Caco-2 (cell line): ENCODE measurements at regions of chr5 and their contacts with region 1.

Region 1: DNA sequence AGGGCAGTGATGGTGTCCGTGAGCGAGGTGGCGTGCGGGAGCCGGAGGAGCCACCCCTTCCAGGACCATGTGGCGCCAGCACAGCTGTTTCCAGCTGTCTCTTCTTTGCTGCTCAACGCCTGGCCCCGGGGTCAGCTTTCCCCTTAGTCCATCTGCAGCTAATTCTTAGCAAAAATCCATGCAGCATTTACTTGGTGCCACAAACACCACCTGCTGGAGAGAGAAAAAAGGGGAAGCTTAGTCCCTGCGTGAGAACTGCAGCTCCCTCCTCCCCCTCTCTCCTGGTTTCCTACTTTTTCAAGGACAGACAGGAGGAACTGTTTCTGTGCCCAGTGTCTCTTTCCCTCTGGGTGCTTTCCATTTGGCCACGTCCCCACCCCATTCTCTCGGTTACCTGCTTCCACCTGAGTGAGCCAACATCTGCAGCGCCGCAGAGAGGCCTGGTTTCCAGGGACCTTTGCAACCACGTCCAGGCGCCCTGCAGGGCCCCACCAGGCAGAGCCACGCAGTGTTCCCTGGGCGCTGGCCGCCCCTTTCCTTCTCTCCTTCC is 3.4 kb downstream of the SLC6A19 start:
- DNase-seq: peak; percentile 68 to 72
- H3K4me3 ChIP-seq: no peak overlapping the region
- H3K4me3 Mint-ChIP-seq: no peak overlapping the region
- H3K27ac Mint-ChIP-seq: no peak overlapping the region
- H3K4me1 ChIP-seq: peaks cover 44% of the 10 kb centered on the region
- H3K4me1 Mint-ChIP-seq: no peaks in the 10 kb centered on the region
- H3K27me3 ChIP-seq: no peaks in the 10 kb centered on the region
- H3K27me3 Mint-ChIP-seq: no peaks in the 10 kb centered on the region
- CTCF ChIP-seq: peak; percentile 55 to 84

Region 2: DNA sequence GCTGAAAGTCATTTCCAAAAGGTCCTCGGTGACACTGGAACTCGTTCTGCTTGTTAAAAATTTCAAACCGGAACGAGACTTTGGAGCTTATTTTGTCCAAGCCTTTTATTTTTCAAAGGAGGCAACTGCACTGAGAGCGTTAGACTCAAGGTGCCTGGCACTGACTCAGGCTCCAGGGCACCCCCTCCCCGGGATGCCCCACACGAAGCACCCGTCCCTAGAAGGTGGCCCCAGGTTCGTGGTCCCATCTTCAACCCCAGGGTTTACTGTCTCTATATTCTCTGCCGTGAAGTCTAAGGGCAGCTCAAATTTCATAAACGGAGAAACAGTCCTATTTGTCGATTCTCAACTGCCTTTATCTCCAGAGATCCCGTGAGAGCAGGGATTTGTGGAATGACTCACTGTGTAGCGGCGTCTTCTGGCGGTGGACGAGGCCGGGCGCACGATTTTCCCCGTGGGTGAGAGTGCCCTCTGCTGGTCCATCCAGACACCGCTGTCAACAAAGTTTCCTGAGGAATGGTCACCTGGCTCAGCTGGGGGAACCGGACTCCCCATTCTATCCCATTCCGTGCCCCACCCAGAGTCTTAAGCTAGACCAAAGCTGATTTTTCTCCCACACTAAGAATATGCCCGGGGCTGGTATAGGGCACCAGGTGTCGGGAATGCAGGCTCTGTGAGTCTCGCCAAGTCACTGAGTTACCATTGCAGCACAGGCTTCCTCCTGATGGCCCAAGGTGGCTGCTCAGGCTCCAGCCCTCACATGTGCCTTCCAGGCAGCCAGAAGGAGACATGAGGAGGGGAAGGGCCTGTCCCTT is 30.4 kb before region 1 on chr5:
- CTCF ChIA-PET with region 1: interaction called, 36 read pairs
- POLR2A ChIA-PET with region 1: interaction called, 6 read pairs
- intact Hi-C with region 1: no loop called
- DNase-seq: peak; percentile 64 to 73
- H3K4me3 ChIP-seq: no peak overlapping the region
- H3K4me3 Mint-ChIP-seq: no peak overlapping the region
- H3K27ac Mint-ChIP-seq: no peak overlapping the region
- H3K4me1 ChIP-seq: peaks cover 12% of the 10 kb centered on the region
- H3K4me1 Mint-ChIP-seq: peaks cover 8% of the 10 kb centered on the region
- H3K27me3 ChIP-seq: no peaks in the 10 kb centered on the region
- H3K27me3 Mint-ChIP-seq: no peaks in the 10 kb centered on the region
- CTCF ChIP-seq: peak; percentile 46 to 64

Region 3: DNA sequence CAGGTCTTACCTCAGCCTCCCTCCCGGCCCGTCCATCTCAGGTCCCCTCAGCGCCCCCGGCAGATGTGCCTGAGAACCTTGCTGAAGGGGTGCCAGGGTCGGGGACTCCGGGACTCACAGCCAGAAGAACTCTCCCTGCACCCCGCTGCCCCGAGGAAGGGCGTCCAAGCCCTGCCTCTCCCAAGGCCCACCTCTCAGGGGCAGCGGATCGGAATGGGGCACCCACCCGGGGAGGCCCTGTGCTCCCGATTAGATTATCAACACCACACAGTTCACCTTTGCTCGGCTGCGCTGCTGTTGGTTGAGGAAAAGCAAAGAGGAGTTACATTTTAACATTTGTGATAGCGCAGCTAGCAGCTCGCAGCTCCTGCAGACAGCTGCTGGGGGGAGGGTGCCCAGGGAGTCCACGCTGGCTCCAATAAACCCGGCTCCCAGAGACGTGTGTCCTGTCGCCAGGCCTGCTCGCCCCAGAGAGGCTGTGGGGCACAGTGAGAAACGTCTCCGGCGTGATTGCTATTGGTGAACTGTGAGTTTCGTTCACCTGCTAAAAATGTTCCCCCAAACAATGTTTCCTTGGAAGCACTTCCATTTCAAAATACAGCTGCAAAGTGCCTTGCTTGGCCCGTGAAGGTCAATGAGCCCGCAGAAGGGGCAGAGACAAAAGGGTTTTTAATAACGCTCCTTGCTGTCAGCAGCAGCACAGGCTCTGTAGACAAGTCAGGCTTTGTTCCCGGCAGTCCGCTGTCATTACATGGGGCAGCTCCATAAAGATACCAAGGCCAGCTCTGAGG is 21.9 kb before region 1 on chr5:
- CTCF ChIA-PET with region 1: interaction called, 21 read pairs
- POLR2A ChIA-PET with region 1: interaction called, 6 read pairs
- intact Hi-C with region 1: loop called (anchors 1 kb)
- DNase-seq: peak; percentile 75 to 89
- H3K4me3 ChIP-seq: peak overlapping the region; percentile 23
- H3K4me3 Mint-ChIP-seq: peak overlapping the region; percentile 61
- H3K27ac Mint-ChIP-seq: peak overlapping the region; percentile 75
- H3K4me1 ChIP-seq: peaks cover 74% of the 10 kb centered on the region
- H3K4me1 Mint-ChIP-seq: peaks cover 16% of the 10 kb centered on the region
- H3K27me3 ChIP-seq: no peaks in the 10 kb centered on the region
- H3K27me3 Mint-ChIP-seq: no peaks in the 10 kb centered on the region
- CTCF ChIP-seq: no peak

Region 4: GRCh38 chr5:1244976-1245375 is 40.2 kb after region 1 on chr5:
- CTCF ChIA-PET with region 1: interaction called, 3 read pairs
- POLR2A ChIA-PET with region 1: no interaction called
- intact Hi-C with region 1: loop called (anchors 2 kb)
- DNase-seq: peak; percentile 52 to 55
- H3K4me3 ChIP-seq: no peak overlapping the region
- H3K4me3 Mint-ChIP-seq: no peak overlapping the region
- H3K27ac Mint-ChIP-seq: no peak overlapping the region
- H3K4me1 ChIP-seq: no peaks in the 10 kb centered on the region
- H3K4me1 Mint-ChIP-seq: no peaks in the 10 kb centered on the region
- H3K27me3 ChIP-seq: no peaks in the 10 kb centered on the region
- H3K27me3 Mint-ChIP-seq: peaks cover 12% of the 10 kb centered on the region
- CTCF ChIP-seq: peak; percentile 28 to 59